Calu3 (cell line): ENCODE measurements at regions of chr4 and their contacts with region 1.

Region 1: DNA sequence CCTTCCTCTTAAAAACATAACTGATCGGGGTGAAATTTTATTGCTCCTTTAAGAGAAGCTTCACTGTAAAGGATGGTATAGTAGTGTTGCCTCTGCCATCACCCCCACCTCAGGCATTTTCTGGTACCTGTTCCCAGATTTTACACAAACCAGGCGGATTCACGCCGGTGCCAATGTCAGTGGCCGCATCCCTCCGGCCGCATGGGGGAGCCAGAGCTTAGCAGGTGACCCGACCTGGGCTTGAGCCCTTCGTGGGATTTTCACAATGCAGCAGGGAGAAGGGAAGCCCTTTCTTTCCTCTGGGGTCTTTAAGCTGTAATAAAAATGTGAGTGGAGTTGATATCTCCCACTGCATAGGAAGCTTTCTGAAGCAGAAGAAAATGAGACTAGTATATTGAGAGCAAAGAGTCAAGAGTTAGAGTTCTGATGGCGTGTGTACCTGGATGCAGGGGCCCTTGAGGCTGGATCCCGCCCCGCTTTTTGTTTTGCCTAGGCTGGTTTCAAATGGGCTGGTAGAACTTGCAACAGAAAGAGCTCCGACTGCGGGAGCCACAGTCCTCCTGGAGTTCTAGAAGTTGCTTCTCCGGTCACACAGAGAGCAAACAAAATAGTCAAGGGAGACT is 59.4 kb downstream of the POLR2B start:
- DNase-seq: peak; percentile 79
- H3K4me3 Mint-ChIP-seq: no peak overlapping the region
- H3K27ac Mint-ChIP-seq: no peak overlapping the region
- H3K4me1 Mint-ChIP-seq: no peaks in the 10 kb centered on the region
- H3K27me3 Mint-ChIP-seq: no peaks in the 10 kb centered on the region
- CTCF ChIP-seq: peak; percentile 68

Region 2: DNA sequence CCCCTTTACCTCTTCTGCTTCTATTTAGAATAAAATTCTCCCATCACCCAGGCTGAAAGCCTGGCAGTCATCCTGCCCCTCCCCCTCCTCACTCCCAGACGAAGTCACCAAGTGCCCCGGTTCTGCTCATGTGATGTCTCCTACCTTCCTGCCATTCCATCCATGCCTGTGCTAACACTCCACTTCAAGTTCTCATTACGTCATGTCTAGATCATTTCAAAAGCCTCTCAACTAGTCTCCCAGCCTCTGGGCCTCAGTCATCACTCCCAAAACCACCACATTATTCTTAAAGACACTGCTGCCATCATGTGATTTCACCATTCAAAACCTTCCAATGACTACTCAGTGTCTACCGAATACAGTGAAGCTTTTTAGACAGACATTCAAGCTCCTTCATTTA is 339.8 kb before region 1 on chr4:
- CTCF ChIA-PET with region 1: no interaction called
- intact Hi-C with region 1: no loop called
- DNase-seq: no peak
- H3K4me3 Mint-ChIP-seq: no peak overlapping the region
- H3K27ac Mint-ChIP-seq: no peak overlapping the region
- H3K4me1 Mint-ChIP-seq: peaks cover 11% of the 10 kb centered on the region
- H3K27me3 Mint-ChIP-seq: no peaks in the 10 kb centered on the region
- CTCF ChIP-seq: no peak

Region 3: DNA sequence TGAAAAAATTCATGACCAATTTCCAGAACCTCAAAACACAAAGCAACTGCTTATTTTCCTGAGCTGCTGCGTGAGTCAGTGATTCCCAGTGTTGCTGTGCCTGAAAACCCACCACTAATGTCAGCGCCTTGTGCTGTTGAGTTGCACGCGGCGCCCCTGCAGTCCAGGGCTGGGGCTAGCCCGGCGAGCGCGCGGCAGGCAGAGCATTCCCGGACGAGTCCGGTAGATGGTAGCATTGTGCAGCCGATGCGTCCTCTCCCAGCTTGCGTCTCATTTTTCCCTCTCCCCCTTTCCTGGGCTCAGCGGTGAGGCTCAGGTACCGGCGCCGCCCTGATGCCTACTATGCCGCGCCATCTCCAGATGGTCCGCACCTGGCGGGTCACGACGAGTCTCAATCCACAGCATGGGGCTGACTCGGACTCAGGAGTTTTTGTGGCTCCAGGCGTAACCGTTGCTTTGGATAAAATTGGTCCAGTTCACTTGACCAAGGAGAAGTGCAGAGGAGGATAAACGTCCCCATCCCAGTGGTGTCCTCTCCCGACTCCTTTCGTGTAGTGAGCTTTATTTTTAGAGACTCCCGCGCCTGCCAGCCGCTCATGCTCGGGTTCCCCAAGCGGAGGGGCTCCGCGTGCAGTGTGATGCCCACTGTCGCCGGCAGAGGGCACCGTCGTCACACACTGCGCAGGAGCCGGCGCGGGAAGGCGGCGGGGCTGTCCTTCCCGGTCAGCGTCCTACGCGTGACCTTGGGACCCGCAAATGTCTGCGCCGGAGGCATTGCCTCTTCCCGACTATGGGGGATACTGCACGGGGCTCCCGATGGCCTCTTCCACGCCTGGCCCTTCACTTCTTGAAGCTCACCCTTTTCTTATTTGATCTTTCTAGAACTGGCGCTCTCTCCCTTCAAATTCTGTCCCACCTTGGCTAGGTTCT is 125.7 kb after region 1 on chr4:
- CTCF ChIA-PET with region 1: interaction called, 6 read pairs
- intact Hi-C with region 1: loop called (anchors 1 kb)
- DNase-seq: peak; percentile 76
- H3K4me3 Mint-ChIP-seq: peak overlapping the region; percentile 82
- H3K27ac Mint-ChIP-seq: peak overlapping the region; percentile 44
- H3K4me1 Mint-ChIP-seq: peaks cover 7% of the 10 kb centered on the region
- H3K27me3 Mint-ChIP-seq: peaks cover 35% of the 10 kb centered on the region
- CTCF ChIP-seq: peak; percentile 60

Region 4: DNA sequence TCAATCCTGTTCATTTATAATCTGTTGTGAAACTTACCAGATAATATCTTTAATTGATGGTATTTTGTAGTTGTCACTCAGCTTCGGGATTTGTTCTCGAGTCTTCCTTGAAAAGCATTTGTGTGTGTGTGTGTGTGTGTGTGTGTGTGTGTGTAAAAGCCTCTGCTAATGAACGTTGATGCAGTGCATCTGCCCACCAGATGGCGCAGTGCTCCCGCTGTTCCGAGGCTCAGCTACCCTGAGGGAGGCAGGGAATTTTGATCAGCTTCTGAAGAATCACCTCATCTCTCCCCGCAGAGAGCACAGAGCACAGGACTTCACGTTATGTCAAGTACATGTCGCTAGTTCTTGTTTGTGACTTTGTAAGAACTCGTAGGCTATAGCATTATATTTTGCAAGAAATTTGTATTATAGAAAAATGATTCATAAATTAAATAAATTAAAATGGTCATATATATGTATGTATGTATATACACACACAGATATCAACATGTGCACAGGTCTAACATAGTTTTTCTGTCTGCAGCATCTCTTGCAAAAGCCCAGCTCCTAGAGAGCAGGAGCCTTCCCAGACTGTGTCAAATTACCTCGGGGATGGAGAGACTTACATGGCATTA is 388.8 kb after region 1 on chr4:
- CTCF ChIA-PET with region 1: no interaction called
- intact Hi-C with region 1: loop called (anchors 10 kb)
- DNase-seq: peak; percentile 52
- H3K4me3 Mint-ChIP-seq: no peak overlapping the region
- H3K27ac Mint-ChIP-seq: no peak overlapping the region
- H3K4me1 Mint-ChIP-seq: no peaks in the 10 kb centered on the region
- H3K27me3 Mint-ChIP-seq: no peaks in the 10 kb centered on the region
- CTCF ChIP-seq: no peak